Spleen (tissue), 13 donors: ENCODE measurements at regions of chr6 and their contacts with region 1.

Region 1: DNA sequence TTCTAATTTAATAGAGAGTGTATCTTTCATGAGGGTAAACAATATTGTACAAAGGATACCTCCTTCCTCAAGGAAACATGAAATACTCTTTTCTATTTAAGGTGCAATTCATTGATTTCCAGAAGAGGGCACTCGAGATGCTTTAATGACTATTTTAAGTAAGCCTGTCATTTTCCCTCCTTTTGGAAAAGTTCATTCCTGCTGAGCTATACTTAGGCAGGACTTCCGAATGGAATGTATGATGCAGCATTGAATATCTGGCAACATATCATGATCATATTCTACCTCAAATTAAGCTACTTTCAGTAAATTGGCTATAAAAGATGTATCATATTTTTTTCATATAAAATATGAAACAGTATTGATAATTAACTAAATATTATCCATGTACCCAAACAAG is 5.0 kb downstream of the DST start:
- DNase-seq: no peak
- H3K4me3 ChIP-seq: no peak overlapping the region
- H3K27ac ChIP-seq: no peak overlapping the region
- H3K4me1 ChIP-seq: no peaks in the 10 kb centered on the region
- H3K27me3 ChIP-seq: no peaks in the 10 kb centered on the region
- CTCF ChIP-seq: peak in 8 of 11 experiments; percentile 25 to 66 (median 57)
- POLR2A ChIP-seq: no peak

Region 2: DNA sequence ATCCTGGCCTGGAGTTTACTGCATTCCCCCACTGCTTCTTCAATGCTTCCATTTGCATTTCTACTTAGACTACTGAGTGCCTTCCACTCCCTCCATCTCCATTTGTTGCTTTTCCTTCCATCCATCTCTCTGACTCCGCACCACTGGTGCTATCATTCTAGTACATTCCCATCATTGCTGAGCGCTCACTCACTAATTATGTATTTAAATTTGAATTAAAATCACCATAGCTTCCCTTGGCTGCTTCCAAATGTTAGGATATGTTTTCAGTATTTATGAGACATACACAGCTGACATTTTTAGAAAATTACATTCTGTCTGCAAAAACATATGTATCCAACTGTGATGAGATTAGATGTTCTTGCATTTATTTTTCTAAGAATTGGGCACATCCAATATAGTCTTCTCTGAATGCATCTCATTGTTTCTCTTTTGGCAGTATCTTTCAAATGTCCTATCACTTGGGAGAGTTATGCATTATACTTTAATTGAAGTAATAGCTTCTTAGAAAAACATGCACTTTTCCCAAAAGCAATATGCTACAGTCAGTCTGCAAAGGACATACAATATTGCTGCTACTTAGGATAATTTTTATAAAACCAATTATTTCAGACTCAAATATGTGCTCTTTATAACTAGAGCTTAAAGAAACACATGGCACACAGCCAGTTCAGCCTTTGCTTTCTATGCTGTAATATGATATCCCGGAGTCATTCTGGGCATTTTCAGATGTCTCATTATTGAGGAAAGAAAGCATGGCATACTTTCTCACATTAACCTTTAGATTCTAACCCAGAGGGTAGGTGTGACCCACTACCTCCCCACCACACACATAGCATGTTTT is 378.2 kb before region 1 on chr6:
- intact Hi-C with region 1: no loop called
- DNase-seq: no peak
- H3K4me3 ChIP-seq: no peak overlapping the region
- H3K27ac ChIP-seq: no peak overlapping the region
- H3K4me1 ChIP-seq: no peaks in the 10 kb centered on the region
- H3K27me3 ChIP-seq: no peaks in the 10 kb centered on the region
- CTCF ChIP-seq: no peak
- POLR2A ChIP-seq: no peak

Region 3: GRCh38 chr6:56671651-56672461 is 34.2 kb after region 1 on chr6:
- intact Hi-C with region 1: loop called (anchors 5 kb)
- DNase-seq: peak; percentile 75
- H3K4me3 ChIP-seq: no peak overlapping the region
- H3K27ac ChIP-seq: peak overlapping the region in 7 of 8 donors; percentile 7 to 78 (median 71)
- H3K4me1 ChIP-seq: peaks cover 0 to 29% (median 12%) of the 10 kb centered on the region in 6 donors
- H3K27me3 ChIP-seq: no peaks in the 10 kb centered on the region
- CTCF ChIP-seq: no peak
- POLR2A ChIP-seq: no peak

Region 4: DNA sequence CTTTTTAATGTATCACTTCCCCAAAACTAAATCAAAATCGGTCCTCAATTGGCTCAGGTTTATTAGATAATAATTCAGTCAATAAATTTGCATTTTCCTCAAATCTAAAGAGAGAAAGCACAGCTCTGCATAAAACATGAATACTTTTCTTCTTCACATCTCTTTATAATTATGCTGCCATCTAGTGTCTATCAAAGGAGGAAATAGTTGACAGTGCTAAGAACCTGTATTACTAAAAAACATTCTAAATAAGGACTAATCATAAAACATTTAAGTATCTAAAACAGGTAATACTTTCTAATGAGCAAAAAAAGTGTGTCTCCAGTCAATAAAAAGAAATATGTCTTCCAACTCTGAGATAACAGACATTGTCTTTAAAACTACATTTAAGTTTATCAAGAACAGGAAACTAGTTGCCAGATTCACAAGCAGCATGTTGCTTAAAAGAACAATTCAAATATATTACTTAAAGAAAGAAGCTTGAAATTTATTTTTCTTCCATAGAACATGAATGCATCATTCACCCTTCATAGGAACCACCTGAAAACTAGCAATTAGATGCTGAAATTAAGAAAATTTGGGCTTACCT is 61.5 kb after region 1 on chr6:
- intact Hi-C with region 1: loop called (anchors 10 kb)
- DNase-seq: no peak
- H3K4me3 ChIP-seq: no peak overlapping the region
- H3K27ac ChIP-seq: no peak overlapping the region
- H3K4me1 ChIP-seq: no peaks in the 10 kb centered on the region
- H3K27me3 ChIP-seq: no peaks in the 10 kb centered on the region
- CTCF ChIP-seq: peak in 8 of 11 experiments; percentile 38 to 55 (median 46)
- POLR2A ChIP-seq: no peak

Region 5: DNA sequence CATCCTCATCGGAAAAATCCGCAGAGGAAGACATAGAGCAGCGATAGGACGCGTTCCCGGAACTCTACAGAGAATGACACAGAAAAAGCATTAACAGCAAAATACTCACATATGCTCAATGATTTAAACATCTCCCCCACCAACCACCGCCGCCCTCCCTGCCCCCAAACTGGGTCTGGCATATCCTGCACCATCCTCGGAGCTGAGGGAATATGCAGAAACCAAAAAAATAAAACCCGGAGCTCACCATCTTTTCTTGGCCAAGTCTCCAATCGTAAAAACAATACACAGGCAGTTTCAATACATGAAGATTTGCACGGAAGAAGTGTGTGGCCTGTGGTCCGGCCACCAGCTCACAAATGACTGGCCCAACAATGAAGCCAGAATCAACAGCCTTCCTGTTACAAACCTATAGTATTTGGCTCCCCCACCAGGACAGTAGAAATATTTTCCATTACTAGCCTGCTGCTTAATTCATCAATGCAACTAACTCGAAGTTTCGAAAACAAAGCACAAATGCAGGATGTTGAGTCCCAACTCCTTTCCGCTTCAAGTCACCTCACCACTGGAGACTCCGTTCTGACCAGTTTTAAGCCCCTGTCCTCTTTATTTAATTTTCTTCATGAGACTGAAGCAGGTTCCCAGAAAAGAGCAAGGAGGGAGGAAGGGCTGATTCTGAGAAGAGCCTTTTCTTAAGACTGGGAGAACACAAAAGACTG is 214.1 kb after region 1 on chr6:
- intact Hi-C with region 1: loop called (anchors 10 kb)
- DNase-seq: no peak
- H3K4me3 ChIP-seq: peak overlapping the region; percentile 17 to 71 (median 43)
- H3K27ac ChIP-seq: peak overlapping the region in 7 of 8 donors; percentile 59 to 82 (median 69)
- H3K4me1 ChIP-seq: peaks cover 0 to 30% (median 20%) of the 10 kb centered on the region in 6 donors
- H3K27me3 ChIP-seq: peaks cover 0 to 19% (median 0%) of the 10 kb centered on the region in 7 donors
- CTCF ChIP-seq: peak in 8 of 11 experiments; percentile 7 to 79 (median 50)
- POLR2A ChIP-seq: no peak